Panc1 (cell line): ENCODE measurements at regions of chr12 and their contacts with region 1.

Region 1: GRCh38 chr12:120056739-120057138 is 59.8 kb downstream of the RAB35 start:
- DNase-seq: no peak
- ATAC-seq: no peak
- H3K4me3 ChIP-seq: no peak overlapping the region
- H3K27ac ChIP-seq: no peak overlapping the region
- H3K4me1 ChIP-seq: no peaks in the 10 kb centered on the region
- H3K27me3 ChIP-seq: no peaks in the 10 kb centered on the region
- CTCF ChIP-seq: no peak

Region 2: GRCh38 chr12:119938049-119938667 is 118.6 kb before region 1 on chr12:
- CTCF ChIA-PET with region 1: no interaction called
- POLR2A ChIA-PET with region 1: no interaction called
- in situ Hi-C with region 1: no loop called
- intact Hi-C with region 1: no loop called
- DNase-seq: peak; percentile 38
- ATAC-seq: peak; percentile 74
- H3K4me3 ChIP-seq: no peak overlapping the region
- H3K27ac ChIP-seq: no peak overlapping the region
- H3K4me1 ChIP-seq: no peaks in the 10 kb centered on the region; the same call in 1 of the 2 replicates
- H3K27me3 ChIP-seq: no peaks in the 10 kb centered on the region
- CTCF ChIP-seq: peak; percentile 89

Region 3: DNA sequence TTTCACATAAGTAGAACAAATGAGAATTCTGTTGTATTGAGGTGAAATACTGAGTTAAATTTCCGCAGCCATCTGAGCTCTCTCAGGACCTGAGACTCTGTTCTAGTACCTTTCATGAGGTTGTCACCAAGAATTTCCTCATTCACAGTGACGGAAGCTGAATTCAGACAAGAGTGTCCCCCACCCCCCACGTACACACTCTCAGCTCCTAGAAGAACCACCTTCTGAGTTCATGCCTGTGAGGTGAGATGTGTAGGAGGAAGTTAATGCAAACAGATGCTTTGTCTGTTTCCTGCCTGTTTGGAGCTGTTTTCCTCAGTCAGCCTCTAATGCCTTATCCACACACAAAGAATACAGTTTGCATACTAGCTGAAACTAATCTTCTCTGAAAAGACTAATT is 49.5 kb before region 1 on chr12:
- CTCF ChIA-PET with region 1: no interaction called
- POLR2A ChIA-PET with region 1: interaction called, 10 read pairs
- in situ Hi-C with region 1: no loop called
- intact Hi-C with region 1: no loop called
- DNase-seq: no peak
- ATAC-seq: no peak
- H3K4me3 ChIP-seq: no peak overlapping the region
- H3K27ac ChIP-seq: no peak overlapping the region
- H3K4me1 ChIP-seq: peaks cover 5% of the 10 kb centered on the region
- H3K27me3 ChIP-seq: no peaks in the 10 kb centered on the region
- CTCF ChIP-seq: no peak